ENCODE measurements at regions of chr7 and their contacts with region 1.

Region 1: GRCh38 chr7:23273141-23273599 is 26.0 kb upstream of the MALSU1 start:
- DNase-seq: no peak
- H3K4me3 ChIP-seq: no peak overlapping the region
- H3K27me3 ChIP-seq: no peaks in the 10 kb centered on the region
- CTCF ChIP-seq: peak; percentile 91

Region 2: DNA sequence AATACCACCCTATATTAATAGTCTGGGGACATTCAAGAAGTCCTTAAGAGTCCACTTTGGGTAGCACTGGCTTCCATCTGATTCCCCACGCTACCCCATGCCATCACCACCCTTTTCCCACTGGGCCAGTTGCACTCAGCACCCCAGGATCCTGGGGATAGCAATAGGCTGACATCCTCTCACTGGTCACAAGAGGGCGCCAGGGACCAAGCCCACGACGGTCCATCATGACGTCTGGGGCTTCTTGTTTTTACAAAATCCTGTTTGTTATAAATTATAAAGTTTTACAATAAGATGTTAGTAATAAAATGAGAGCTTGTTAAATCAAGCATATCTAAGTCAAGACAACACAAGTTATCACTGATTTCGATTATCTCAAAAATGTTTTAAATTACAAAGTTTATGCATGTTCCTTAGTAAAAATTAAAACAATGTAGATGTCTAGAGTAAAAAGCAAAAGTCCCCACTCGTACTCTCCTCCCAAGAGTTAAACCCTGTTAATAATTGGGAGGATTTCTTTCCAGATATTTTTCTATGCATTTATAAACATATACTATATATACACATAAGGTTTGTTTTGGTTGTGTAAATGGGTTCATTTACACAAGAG is 11.2 kb before region 1 on chr7:
- CTCF ChIA-PET with region 1: interaction called, 39 read pairs
- POLR2A ChIA-PET with region 1: no interaction called
- DNase-seq: no peak
- H3K4me3 ChIP-seq: no peak overlapping the region
- H3K27me3 ChIP-seq: no peaks in the 10 kb centered on the region
- CTCF ChIP-seq: peak; percentile 96

Region 3: DNA sequence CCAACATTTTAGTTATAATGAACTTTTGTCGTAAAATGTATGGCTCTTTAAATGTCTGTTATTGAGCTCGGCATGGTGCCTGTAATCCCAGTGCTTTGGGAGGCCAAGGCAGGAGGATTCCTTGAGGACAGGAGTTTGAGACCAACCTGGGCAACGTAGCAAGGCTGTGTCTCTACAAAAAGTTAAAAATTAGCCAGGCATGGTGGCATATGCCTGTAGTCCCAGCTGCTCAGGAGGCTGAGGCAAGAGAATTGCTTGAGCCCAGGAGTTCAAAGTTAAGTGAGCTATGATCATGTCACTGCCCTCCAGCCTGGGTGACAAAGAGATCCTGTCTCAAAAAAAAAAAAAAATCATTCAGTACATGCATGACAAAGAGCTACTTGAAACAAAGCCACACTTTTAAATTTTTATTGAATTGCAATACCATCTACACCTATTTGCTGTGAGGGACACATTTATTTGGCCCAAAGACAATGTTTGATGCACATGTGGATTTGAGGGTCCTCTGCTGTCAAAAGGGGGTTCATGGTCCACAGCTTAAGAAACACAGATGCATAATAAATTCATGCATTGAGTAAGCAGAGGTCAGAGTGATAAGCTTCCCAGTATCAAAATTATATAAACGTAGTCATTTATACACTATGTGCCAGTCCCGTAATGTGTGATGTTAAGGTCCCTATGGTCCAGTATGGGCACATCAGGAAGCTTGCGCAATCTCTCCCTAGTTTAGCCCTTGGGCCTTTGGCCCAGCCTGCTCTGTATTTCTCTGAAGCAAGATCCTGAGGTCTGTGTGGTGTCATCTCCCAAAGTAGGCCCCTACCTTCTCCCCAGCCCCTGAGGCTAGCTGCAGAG is 21.6 kb after region 1 on chr7:
- CTCF ChIA-PET with region 1: interaction called, 12 read pairs
- POLR2A ChIA-PET with region 1: interaction called, 6 read pairs
- DNase-seq: no peak
- H3K4me3 ChIP-seq: no peak overlapping the region
- H3K27me3 ChIP-seq: no peaks in the 10 kb centered on the region
- CTCF ChIP-seq: no peak

Measured in BJ (cell line).